HEK293T (cell line): ENCODE measurements at regions of chr3 and their contacts with region 1.

Region 1: DNA sequence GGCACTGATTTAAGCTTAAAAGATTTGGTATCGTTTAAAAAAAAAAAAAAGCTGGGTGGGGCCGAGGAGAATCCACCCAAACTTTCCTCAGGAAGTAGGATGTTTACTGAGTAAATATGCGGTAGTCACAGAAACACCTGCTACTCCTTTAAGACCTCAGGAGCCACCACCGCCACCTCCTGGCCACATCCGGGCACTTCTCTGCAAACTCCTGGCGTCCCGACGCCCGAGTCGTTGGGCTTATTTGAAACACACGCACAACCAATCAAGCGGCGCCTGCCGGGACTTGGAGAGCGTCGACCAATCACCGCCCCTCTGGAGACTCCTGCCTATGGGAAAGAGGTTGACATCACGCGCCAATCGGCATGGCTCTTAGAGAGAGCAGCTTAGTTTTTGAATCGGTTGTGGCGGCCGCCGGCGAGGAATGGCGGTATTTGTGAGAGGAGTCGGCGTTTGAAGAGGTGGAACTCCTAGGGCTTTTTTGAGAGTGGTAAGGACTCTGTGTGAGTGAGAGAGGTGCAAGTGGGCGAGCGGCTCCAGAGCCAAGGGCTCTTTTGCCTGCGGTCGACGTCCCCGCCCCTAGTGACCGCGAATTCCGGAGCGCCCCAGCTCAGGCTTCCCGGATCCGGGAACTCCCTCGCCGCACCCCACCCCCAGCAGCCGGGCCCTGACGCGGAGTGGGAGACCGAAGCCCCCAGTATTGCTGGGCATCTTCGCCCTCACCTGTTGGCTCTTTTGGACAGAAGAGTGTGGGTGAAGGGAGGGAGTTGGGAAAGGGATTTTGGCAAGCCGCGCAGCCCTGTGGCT is at the start of gene ECT2:
- DNase-seq: peak; percentile 97

Region 2: DNA sequence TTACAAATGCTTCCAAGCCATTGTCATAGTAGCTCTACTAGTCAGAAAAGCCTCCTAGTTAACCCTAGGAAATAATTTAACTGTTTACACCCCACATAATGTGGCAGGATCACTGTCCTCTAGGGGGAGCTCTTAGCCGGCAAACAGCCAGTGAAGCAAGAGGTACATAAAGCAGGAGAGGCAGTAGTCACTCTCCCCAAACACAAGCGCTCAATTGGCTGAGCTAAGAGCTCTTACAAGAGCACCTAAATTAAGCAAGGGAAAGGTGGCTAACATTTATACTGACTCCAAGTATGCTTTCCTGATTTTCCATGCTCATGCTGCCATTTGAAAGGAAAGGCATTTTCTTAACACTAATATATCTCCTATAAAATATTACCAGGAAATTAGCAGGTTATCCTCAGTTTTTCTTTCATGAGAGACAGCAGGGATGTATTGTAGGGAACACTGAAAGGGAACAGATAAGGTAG is 77.3 kb before region 1 on chr3:
- CTCF ChIA-PET with region 1: interaction called, 14 read pairs
- POLR2A ChIA-PET with region 1: interaction called, 3 read pairs
- DNase-seq: peak; percentile 61